ENCODE measurements at regions of chr3 and their contacts with region 1.

Region 1: GRCh38 chr3:119990888-119991287 is 103.4 kb downstream of the GSK3B start:
- DNase-seq: no peak
- ATAC-seq: no peak
- H3K4me3 ChIP-seq: no peak overlapping the region
- H3K27ac ChIP-seq: no peak overlapping the region
- H3K4me1 ChIP-seq: no peaks in the 10 kb centered on the region
- H3K27me3 ChIP-seq: no peaks in the 10 kb centered on the region
- CTCF ChIP-seq: no peak
- POLR2A ChIP-seq: no peak
- RAD21 ChIP-seq: no peak

Region 2: GRCh38 chr3:119937229-119937628 is 53.7 kb before region 1 on chr3:
- CTCF ChIA-PET with region 1: no interaction called
- POLR2A ChIA-PET with region 1: no interaction called
- RAD21 ChIA-PET with region 1: no interaction called
- intact Hi-C with region 1: loop called (anchors 10 kb)
- DNase-seq: no peak
- ATAC-seq: no peak
- H3K4me3 ChIP-seq: no peak overlapping the region
- H3K27ac ChIP-seq: no peak overlapping the region
- H3K4me1 ChIP-seq: no peaks in the 10 kb centered on the region
- H3K27me3 ChIP-seq: no peaks in the 10 kb centered on the region
- CTCF ChIP-seq: no peak
- POLR2A ChIP-seq: no peak
- RAD21 ChIP-seq: no peak

Region 3: DNA sequence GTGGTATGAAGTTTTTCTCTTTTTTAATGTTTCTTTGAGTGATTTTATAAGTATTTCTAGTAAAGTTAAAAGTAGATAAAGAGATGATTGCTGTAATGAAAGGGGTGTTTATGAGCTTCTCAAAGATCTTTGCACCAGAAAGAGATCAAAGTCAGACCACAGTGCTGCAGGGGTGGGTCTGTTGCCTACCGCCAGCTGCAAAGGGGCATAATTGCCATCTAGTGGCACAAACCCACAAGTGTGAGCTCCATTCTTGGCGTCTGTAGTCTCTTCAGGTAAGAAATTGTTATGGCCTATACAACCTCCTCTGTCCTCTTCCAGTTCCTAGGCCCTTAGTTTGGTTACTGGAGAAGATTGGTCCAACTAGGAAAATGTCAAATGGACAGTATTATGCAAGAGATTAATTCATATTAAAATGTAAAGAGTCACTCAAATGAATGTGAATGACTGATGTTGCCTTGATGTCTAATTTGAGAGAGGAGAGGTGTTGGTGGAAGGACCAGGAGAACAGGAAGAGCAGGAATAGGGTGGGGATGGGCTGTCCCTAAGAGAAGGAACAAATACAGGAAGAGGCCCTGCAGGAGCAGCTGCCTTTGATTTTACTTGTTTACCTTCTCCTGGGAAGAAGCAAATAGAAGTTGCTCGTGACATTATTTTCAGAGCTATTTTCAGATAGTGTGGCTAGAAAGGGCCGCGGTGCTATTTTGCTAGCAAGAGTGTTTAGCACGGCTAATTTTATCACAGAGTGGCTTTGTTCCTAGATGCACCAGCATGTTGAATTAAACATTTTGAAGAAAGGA is 156.4 kb after region 1 on chr3:
- CTCF ChIA-PET with region 1: no interaction called
- POLR2A ChIA-PET with region 1: no interaction called
- RAD21 ChIA-PET with region 1: no interaction called
- intact Hi-C with region 1: no loop called
- DNase-seq: no peak
- ATAC-seq: peak; percentile 63
- H3K4me3 ChIP-seq: no peak overlapping the region
- H3K27ac ChIP-seq: no peak overlapping the region
- H3K4me1 ChIP-seq: peaks cover 7 to 42% of the 10 kb centered on the region in 2 experiments
- H3K27me3 ChIP-seq: no peaks in the 10 kb centered on the region
- CTCF ChIP-seq: peak; percentile 46 to 60 (median 52); a peak in 5 of 6 replicates
- POLR2A ChIP-seq: no peak
- RAD21 ChIP-seq: peak; percentile 77

Measured in HCT116 (cell line).